ENCODE measurements at regions of chr1 and their contacts with region 1.

Region 1: DNA sequence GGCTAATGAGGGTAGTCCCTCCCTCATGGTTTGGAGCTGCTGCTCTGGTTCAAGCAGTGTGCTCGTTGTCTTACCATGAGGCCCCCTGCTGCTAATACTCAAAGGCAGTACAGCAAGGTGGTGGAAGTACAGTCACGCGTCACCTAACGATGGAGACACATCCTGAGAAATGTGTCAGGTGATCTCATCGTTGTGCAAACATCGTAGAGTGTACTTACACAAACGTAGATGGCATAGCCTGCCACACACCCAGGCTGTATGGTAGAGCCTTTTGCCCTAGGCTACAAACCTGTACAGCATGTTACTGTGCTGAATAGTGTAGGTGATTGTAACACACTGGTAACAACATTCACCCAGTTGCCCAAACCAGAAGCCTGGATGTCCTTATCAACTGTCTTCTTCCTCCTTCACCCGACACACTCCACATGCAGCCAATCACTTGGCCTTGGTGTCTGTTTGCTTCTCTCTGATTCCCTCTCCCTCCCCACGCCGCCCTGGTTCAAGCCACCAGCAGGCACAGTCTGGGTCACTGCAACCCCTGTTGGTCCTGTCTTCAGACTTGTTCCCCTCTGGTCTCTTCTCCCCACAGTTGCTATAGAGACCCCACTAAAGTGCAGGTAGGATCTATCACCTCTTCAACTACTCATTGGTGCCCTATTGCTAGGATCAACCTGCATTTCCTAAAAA is 6.0 kb upstream of the KCNA2 start:
- DNase-seq: peak in 1 of 2 donors; percentile 50
- H3K4me3 ChIP-seq: no peak overlapping the region
- H3K27ac ChIP-seq: no peak overlapping the region
- H3K4me1 ChIP-seq: peaks cover 6 to 10% (median 8%) of the 10 kb centered on the region in 4 donors
- H3K27me3 ChIP-seq: peaks cover 0 to 85% (median 29%) of the 10 kb centered on the region in 3 donors
- CTCF ChIP-seq: no peak
- EP300 ChIP-seq: no peak
- POLR2A ChIP-seq: no peak

Region 2: GRCh38 chr1:110554871-110555801 is 57.1 kb before region 1 on chr1:
- intact Hi-C with region 1: loop called (anchors 5 kb)
- DNase-seq: peak; percentile 53 to 79
- H3K4me3 ChIP-seq: peak overlapping the region; percentile 36 to 43 (median 41)
- H3K27ac ChIP-seq: peak overlapping the region in 1 of 5 donors; percentile 51
- H3K4me1 ChIP-seq: peaks cover 9 to 13% (median 11%) of the 10 kb centered on the region in 4 donors
- H3K27me3 ChIP-seq: peaks cover 0 to 76% (median 22%) of the 10 kb centered on the region in 3 donors
- CTCF ChIP-seq: peak in 5 of 7 experiments; percentile 43 to 68 (median 57)
- EP300 ChIP-seq: no peak
- POLR2A ChIP-seq: no peak

Region 3: DNA sequence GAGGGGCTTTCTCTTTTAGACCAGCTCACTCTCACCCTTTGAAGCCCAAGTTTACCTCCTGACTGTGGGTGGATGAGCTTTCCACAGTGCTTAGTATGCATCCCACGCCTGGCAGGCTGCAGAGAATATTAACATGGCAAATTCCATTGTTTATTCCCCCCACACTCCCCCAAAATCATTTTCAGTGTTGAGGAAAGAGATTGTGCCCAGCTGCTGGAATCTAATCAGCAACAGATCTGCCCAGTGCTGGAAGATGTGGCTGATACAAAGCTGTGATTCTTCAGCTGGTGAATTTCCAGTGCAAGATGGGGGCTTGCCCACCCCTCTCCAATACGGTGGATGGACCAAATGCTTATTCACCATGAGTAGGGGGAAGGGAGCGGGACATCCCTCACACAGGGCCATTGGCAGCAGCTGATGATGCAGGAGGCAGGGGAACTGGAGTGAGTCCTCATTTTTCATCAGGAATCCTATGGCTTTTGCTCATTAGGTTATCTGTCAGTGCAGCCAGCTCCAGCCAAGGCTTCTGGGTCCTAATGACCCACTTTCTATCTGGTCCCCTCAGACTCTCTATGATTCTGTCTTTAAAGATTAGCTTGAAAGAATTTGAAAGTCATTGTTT is 102.3 kb after region 1 on chr1:
- intact Hi-C with region 1: no loop called
- DNase-seq: peak in 1 of 2 donors; percentile 23
- H3K4me3 ChIP-seq: no peak overlapping the region
- H3K27ac ChIP-seq: no peak overlapping the region
- H3K4me1 ChIP-seq: no peaks in the 10 kb centered on the region
- H3K27me3 ChIP-seq: peaks cover 0 to 26% (median 3%) of the 10 kb centered on the region in 3 donors
- CTCF ChIP-seq: no peak
- EP300 ChIP-seq: no peak
- POLR2A ChIP-seq: no peak